Dorsolateral prefrontal cortex (tissue), 120 donors: ENCODE measurements at regions of chr6 and their contacts with region 1.

Region 1: DNA sequence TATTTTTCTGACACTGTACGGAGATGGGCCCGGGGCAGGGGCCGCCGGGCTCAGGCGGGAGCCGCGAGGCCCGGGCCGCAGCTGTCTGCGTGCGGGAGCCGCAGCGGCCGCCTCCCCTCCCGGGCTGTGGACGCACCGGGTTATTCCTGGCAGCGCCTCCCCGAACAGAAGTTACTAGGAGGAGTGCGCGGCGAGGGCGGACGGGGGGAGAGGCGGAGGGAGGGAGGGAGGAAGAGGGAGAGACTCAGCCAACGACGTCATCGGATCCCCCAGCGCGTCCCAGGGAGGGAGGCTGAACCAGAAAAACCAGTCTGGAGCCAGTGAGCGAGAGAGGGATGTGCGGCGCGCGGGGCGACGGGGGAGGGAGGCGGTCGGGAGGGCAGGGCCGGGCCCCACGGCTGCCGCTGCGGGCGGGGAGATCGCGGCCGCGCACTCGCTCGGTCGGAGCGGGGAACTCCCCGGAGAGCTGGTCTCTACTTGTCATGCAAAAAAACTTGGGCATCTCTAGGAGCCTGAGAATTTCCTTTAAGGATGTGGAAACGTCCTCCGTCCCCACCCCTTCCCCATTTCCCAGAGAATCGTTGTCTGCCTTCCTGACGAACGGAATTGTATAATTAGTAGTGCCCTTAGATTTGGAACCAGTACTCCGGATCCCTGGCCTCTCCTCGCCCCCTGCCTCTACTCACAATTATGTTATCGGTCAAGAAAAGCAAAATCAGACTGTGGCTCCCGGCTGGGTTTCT is 1.4 kb upstream of the HIVEP2 start:
- DNase-seq: peak; percentile 89 to 98 (median 96)
- H3K4me3 ChIP-seq: peak overlapping the region; percentile 50 to 98 (median 91)
- H3K27ac ChIP-seq: peak overlapping the region; percentile 94 to 100 (median 98)
- H3K27me3 ChIP-seq: peaks cover 0 to 2% (median 0%) of the 10 kb centered on the region in 45 donors
- CTCF ChIP-seq: peak in 5 of 56 donors; percentile 2 to 26 (median 18)

Region 2: DNA sequence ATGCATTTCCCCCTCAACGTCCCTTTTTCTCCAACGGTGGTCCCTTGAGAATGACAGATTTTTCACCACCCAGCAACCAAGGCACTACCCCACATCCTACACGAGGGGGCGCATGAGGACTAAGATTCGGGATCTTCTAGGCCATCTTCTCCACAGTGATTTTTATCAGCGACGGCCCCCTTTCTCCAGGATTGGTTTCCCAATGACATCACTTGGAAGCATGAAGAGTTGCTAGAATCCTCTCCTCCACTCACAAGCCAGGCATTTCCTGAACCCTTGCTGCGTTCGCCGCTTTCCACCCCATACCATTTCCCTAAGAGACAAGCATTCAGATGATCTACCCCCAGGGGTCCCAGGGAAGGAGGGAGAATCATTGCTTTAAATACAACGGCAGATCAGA is 253.4 kb before region 1 on chr6:
- intact Hi-C with region 1: loop called (anchors 5 kb)
- DNase-seq: peak in 9 of 10 donors; percentile 51 to 73 (median 61)
- H3K4me3 ChIP-seq: peak overlapping the region in 1 of 59 donors; percentile 2
- H3K27ac ChIP-seq: peak overlapping the region in 1 of 59 donors; percentile 9
- H3K27me3 ChIP-seq: no peaks in the 10 kb centered on the region
- CTCF ChIP-seq: peak; percentile 78 to 99 (median 95)

Region 3: GRCh38 chr6:142871910-142872331 is 74.4 kb before region 1 on chr6:
- intact Hi-C with region 1: loop called in 1 of 2 experiments (anchors 5 kb)
- DNase-seq: no peak
- H3K4me3 ChIP-seq: peak overlapping the region in 32 of 59 donors; percentile 1 to 59 (median 26)
- H3K27ac ChIP-seq: peak overlapping the region in 53 of 59 donors; percentile 0 to 83 (median 65)
- H3K27me3 ChIP-seq: no peaks in the 10 kb centered on the region
- CTCF ChIP-seq: no peak

Region 4: DNA sequence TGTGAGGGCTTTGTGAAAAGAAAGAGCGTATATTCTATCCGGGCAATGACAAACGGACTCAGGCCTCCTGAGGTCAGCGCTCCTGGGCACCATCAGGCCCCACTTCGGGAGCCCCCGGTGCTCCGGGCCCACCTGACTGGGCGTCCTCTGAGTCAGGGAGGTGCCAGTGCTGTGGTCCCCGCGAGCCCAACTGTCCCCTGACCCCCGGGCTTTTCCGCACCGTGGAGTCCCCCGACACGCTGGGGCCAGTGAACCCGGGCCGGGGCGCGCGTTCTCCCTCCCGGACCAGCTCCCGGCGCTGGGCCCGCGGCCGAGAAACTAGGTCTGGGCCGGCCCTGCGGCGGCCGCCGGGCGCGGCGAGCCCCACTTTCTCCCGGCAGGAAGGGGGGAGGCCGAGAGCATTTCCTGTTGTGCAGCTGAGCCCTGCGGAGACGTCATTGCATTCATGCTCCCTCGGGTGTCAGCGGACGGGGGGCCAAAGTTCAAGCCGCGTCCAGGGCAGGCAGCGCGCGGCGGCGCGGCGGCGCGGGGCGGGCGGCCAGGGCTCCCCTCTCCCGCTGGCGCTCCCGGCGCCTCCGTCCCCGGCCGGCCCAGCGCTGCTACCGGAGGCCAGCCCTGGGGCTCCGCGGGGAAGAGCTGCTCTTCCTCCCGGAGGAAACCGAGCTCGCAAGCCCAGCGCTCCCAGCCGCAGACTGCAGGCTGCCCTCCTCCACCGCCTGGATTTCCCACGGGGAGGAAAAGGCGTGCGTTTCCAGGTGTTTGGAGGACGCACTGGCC is 19.7 kb before region 1 on chr6:
- intact Hi-C with region 1: loop called in 1 of 2 experiments (anchors 2 kb)
- DNase-seq: peak; percentile 59 to 89 (median 85)
- H3K4me3 ChIP-seq: peak overlapping the region; percentile 49 to 86 (median 72)
- H3K27ac ChIP-seq: peak overlapping the region; percentile 82 to 98 (median 95)
- H3K27me3 ChIP-seq: no peaks in the 10 kb centered on the region
- CTCF ChIP-seq: peak in 13 of 56 donors; percentile 4 to 44 (median 18)

Region 5: GRCh38 chr6:143009851-143010250 is 63.5 kb after region 1 on chr6:
- intact Hi-C with region 1: no loop called
- DNase-seq: no peak
- H3K4me3 ChIP-seq: no peak overlapping the region
- H3K27ac ChIP-seq: no peak overlapping the region
- H3K27me3 ChIP-seq: no peaks in the 10 kb centered on the region
- CTCF ChIP-seq: no peak

Region 6: DNA sequence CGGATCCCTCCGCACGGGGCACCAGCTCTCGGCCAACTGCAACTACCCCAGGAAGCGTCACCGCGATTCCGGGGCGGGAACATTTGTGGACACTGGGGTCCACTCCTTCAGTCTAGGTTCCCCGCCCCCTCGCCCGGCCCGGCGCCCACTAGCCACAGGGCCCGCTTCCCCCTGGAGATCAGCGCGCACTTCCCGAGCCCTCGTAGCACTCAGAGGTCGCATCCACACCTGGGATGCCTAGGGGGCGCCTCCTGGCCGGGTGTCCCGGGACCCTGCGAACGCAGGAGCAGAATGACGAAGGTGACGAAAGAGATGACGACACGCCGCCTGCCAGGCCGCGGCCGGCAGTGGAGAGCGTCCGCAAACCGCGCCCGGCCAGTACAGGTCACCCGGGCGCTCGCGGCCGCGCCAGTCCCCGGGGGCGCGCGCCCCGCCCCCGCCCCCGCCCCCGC is 114.0 kb after region 1 on chr6:
- intact Hi-C with region 1: loop called (anchors 2 to 5 kb)
- DNase-seq: peak; percentile 60 to 87 (median 76)
- H3K4me3 ChIP-seq: peak overlapping the region; percentile 61 to 99 (median 89)
- H3K27ac ChIP-seq: peak overlapping the region; percentile 81 to 98 (median 92)
- H3K27me3 ChIP-seq: no peaks in the 10 kb centered on the region
- CTCF ChIP-seq: peak in 25 of 56 donors; percentile 7 to 41 (median 21)

Region 7: DNA sequence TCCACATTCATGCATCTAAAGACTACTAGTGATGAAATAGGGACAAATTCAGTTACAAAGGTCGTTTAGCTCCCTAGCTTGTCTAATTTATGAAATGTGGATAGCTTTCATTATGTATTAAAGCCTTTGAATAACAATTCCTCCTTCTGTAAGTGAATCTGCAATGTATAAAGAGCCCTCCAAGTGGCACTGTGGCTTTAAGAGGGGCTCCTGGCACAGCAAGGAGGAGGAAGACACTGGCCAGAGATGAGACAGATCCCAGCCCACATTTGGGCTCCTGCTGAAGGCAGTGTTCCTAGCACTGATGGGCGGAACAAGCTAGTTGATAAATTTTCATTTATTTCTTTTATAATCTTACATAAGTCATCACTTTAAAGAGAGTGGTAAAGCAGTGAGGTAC is 582.7 kb after region 1 on chr6:
- intact Hi-C with region 1: no loop called
- DNase-seq: no peak
- H3K4me3 ChIP-seq: no peak overlapping the region
- H3K27ac ChIP-seq: no peak overlapping the region
- H3K27me3 ChIP-seq: no peaks in the 10 kb centered on the region
- CTCF ChIP-seq: peak in 1 of 56 donors; percentile 10